Activated naive CD4-positive, alpha-beta T cell treated with anti-CD3 and anti-CD28 coated beads for 36 hours (primary cell): ENCODE measurements at regions of chr11 and their contacts with region 1.

Region 1: DNA sequence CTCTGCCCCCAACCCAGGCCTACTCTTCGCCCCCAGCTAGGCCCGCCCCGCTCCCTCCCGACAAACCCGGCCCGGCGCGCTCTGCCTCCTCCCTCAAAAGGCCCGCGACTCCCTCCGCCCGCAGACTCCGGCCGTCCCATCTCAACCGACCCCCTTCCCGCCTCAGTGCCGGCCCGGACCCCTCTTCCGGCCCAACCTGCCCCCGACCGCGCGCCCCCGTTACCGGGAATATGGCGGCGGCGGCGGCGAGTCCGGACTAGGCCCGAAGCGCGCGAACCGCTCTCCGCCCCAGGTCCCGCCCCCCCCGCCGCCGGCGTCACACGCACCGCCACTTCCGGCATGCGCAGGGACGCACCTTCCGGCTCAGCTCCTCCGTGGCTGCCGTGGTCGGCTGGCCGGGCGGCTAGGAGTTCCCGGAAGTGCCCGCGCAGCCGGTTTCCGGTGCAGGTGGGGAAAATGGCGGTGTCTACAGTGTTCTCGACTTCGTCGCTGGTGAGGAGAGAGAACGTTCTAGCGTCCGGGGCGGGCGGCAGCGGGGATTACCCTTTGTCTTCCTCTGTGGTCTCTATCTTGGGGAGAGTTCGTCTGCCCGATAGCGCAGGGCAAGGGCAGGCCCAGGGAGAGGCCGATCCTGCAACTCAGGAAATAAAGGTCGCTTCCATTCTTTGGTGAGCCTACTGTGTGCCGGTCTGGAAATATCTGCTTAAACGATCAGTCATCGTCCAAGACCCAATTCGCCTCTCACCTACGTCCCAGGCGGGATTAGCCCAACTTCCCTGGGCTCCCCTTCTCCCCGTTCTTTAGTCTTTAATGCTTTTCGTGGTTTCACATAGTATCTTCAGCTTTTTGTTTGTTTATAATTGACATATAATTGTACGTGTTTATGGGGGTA is at the starts of genes CPSF7 and SDHAF2:
- DNase-seq: peak; percentile 98
- H3K4me3 Mint-ChIP-seq: peak within 1 kb of the TSS; percentile 98
- H3K27ac Mint-ChIP-seq: peak within 1 kb of the TSS; percentile 97
- H3K4me1 Mint-ChIP-seq: peaks cover 65% of the 10 kb centered on the region
- H3K27me3 Mint-ChIP-seq: no peaks in the 10 kb centered on the region
- total RNA-seq, gene CPSF7: 106 to 108 TPM
- total RNA-seq, gene SDHAF2: 23.7 to 27.0 TPM

Region 2: GRCh38 chr11:60841797-60842667 is 587.9 kb before region 1 on chr11 and contains the start of gene CCDC86:
- CTCF ChIA-PET with region 1: no interaction called
- intact Hi-C with region 1: loop called (anchors 2 kb)
- DNase-seq: peak; percentile 98
- H3K4me3 Mint-ChIP-seq: peak within 1 kb of the TSS; percentile 78
- H3K27ac Mint-ChIP-seq: peak within 1 kb of the TSS; percentile 86
- H3K4me1 Mint-ChIP-seq: peaks cover 33% of the 10 kb centered on the region
- H3K27me3 Mint-ChIP-seq: no peaks in the 10 kb centered on the region
- total RNA-seq, gene CCDC86: 38.8 to 41.2 TPM

Region 3: DNA sequence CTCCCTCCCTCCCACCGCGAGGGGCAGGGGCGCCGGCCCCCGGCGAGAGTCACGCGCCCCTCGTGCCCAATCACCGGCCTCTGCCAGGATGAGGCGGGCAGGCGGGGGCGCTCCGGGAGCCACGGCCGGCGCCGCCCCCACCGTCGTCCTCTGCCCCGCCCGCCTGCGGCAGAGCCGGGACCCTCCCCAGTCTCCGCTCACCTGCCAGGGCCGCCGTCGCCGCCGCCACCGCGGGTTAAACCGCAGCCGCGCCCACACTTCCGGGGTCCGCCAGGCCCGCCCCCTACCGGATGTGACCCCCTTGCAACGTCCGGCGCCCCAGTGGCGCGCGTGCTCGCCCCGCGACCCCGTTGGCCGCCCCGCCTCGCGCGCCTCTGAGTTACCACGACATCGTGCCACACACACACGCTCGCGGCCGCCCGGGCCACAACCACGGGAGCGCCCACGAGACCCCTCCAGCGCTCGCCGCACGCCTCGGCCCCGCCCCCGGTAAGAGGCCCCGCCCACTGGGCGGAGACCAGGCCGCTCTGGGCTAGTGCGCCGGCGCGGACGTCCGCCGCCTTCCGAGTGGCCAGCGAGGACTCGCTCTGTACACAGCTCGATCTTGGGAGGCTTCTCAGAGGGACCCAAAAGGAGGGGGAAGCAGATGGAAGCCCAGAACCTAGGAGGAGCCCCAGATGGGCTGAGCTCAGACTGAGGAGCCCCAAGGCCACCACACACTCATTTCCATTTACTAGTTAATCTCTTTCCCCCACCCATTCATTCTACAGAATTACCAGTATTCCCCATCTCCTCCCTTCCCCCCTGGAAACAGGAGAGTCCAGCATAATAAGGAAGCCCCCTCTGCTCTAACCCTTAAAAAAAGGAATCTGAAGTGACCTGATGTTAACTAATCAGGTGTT is 268.5 kb before region 1 on chr11 and contains the start of gene VPS37C:
- CTCF ChIA-PET with region 1: no interaction called
- intact Hi-C with region 1: loop called (anchors 2 kb)
- DNase-seq: peak; percentile 91
- H3K4me3 Mint-ChIP-seq: peak within 1 kb of the TSS; percentile 94
- H3K27ac Mint-ChIP-seq: peak within 1 kb of the TSS; percentile 93
- H3K4me1 Mint-ChIP-seq: peaks cover 62% of the 10 kb centered on the region
- H3K27me3 Mint-ChIP-seq: no peaks in the 10 kb centered on the region
- total RNA-seq, gene VPS37C: 8.5 to 8.9 TPM

Region 4: DNA sequence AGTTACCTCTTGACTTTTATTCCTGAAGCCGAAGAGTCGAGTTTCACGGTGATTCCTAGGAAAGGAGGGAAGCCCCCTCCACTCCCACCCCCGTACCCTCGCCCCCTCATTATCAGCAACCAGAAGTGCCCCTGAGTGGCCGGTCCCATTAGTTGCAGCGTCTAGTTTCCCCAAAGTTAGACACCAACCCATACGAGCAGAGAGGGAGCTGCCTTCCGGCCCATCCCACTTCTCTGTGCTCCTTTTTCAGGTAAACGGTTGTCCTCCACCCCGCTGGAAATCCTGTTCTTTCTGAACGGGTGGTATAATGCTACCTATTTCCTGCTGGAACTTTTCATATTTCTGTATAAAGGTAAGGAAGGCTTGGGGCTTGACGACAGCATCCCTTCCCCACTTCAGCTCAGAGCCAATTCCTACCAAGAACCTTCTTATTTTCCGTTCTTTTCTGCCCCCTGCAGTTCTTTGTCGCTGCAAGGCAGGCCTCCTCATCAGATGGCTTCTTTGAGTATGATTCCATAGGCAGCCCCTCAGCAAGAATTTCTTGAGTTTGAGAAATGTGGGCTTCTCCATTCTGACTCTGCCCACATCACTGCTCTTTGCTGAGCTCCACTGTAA is 36.8 kb before region 1 on chr11:
- CTCF ChIA-PET with region 1: interaction called, 7 read pairs
- intact Hi-C with region 1: loop called (anchors 1 kb)
- DNase-seq: peak; percentile 37
- H3K4me3 Mint-ChIP-seq: peak overlapping the region; percentile 89
- H3K27ac Mint-ChIP-seq: peak overlapping the region; percentile 81
- H3K4me1 Mint-ChIP-seq: peaks cover 17% of the 10 kb centered on the region
- H3K27me3 Mint-ChIP-seq: no peaks in the 10 kb centered on the region

Region 5: GRCh38 chr11:61446211-61446651 is 16.3 kb after region 1 on chr11:
- CTCF ChIA-PET with region 1: interaction called, 118 read pairs
- intact Hi-C with region 1: loop called (anchors 1 kb)
- DNase-seq: peak; percentile 96
- H3K4me3 Mint-ChIP-seq: no peak overlapping the region
- H3K27ac Mint-ChIP-seq: peak overlapping the region; percentile 38
- H3K4me1 Mint-ChIP-seq: peaks cover 27% of the 10 kb centered on the region
- H3K27me3 Mint-ChIP-seq: no peaks in the 10 kb centered on the region

Region 6: GRCh38 chr11:61509043-61510029 is 79.4 kb after region 1 on chr11:
- CTCF ChIA-PET with region 1: interaction called, 18 read pairs
- intact Hi-C with region 1: loop called (anchors 1 kb)
- DNase-seq: peak; percentile 75
- H3K4me3 Mint-ChIP-seq: peak overlapping the region; percentile 18
- H3K27ac Mint-ChIP-seq: no peak overlapping the region
- H3K4me1 Mint-ChIP-seq: peaks cover 7% of the 10 kb centered on the region
- H3K27me3 Mint-ChIP-seq: peaks cover 47% of the 10 kb centered on the region